Activated B cell treated with CpG ODN at 0.5 μM for 24 hours (primary cell): ENCODE measurements at regions of chr16 and their contacts with region 1.

Region 1: GRCh38 chr16:11742539-11743307 is at the start of gene TXNDC11:
- DNase-seq: peak; percentile 100
- ATAC-seq: peak; percentile 91
- H3K4me3 Mint-ChIP-seq: peak within 1 kb of the TSS; percentile 89
- H3K27ac Mint-ChIP-seq: peak within 1 kb of the TSS; percentile 89
- H3K4me1 Mint-ChIP-seq: peaks cover 58% of the 10 kb centered on the region
- H3K27me3 Mint-ChIP-seq: no peaks in the 10 kb centered on the region
- CTCF ChIP-seq: no peak
- total RNA-seq, gene TXNDC11: 54.3 and 63.2 TPM in 2 replicates

Region 2: DNA sequence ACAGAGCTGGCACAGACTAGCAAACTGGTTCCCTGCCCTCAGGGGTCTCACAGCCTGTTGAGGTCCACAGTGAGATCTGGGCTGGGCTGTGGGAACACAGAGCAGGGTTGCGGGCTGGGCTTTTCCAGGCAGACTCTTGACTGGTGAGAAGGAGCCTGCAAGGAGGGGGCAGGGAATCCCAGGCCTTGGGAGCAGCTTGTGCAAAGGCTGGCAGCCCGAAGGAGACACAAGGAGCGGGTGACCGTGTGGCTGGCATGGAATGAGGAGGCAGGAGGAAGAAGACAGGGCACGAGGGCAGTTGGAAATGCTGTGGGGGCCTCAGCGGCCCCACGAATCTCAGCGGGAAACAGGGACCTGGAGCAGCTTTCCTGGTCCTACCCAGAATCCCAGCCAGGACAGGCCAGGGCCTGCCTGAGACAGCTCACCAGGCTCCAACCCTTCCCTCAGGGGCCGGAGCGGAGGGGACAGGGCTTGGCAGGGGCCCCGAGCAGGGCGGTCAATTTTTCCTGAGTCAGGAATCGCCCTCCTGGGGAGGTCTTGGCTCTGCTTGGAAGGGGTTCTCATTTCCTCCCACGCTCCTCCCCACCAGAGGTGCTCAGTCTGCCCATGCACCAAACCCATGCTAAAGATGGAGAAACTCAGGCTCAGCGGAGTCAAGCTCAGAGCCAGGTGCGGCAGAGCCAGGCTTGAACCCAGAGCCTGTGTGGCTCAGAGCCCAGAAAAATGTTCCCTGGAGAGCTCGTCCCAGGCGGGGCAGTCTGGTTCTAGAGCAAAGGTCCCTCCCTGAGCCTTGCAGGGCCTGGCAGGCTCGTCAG is 83.6 kb before region 1 on chr16:
- CTCF ChIA-PET with region 1: no interaction called
- POLR2A ChIA-PET with region 1: no interaction called
- intact Hi-C with region 1: no loop called
- DNase-seq: no peak
- ATAC-seq: no peak
- H3K4me3 Mint-ChIP-seq: no peak overlapping the region
- H3K27ac Mint-ChIP-seq: no peak overlapping the region
- H3K4me1 Mint-ChIP-seq: peaks cover 12% of the 10 kb centered on the region
- H3K27me3 Mint-ChIP-seq: no peaks in the 10 kb centered on the region
- CTCF ChIP-seq: no peak

Region 3: GRCh38 chr16:11689031-11689761 is 53.5 kb before region 1 on chr16:
- CTCF ChIA-PET with region 1: no interaction called
- POLR2A ChIA-PET with region 1: interaction called, 13 read pairs
- intact Hi-C with region 1: loop called (anchors 2 kb)
- DNase-seq: no peak
- ATAC-seq: peak; percentile 98
- H3K4me3 Mint-ChIP-seq: peak overlapping the region; percentile 58
- H3K27ac Mint-ChIP-seq: peak overlapping the region; percentile 84
- H3K4me1 Mint-ChIP-seq: peaks cover 77% of the 10 kb centered on the region
- H3K27me3 Mint-ChIP-seq: no peaks in the 10 kb centered on the region
- CTCF ChIP-seq: no peak

Region 4: GRCh38 chr16:11757671-11758545 is 15.2 kb after region 1 on chr16:
- CTCF ChIA-PET with region 1: no interaction called
- POLR2A ChIA-PET with region 1: interaction called, 61 read pairs
- intact Hi-C with region 1: loop called (anchors 1 kb)
- DNase-seq: no peak
- ATAC-seq: no peak
- H3K4me3 Mint-ChIP-seq: no peak overlapping the region
- H3K27ac Mint-ChIP-seq: no peak overlapping the region
- H3K4me1 Mint-ChIP-seq: peaks cover 31% of the 10 kb centered on the region
- H3K27me3 Mint-ChIP-seq: no peaks in the 10 kb centered on the region
- CTCF ChIP-seq: no peak

Region 5: DNA sequence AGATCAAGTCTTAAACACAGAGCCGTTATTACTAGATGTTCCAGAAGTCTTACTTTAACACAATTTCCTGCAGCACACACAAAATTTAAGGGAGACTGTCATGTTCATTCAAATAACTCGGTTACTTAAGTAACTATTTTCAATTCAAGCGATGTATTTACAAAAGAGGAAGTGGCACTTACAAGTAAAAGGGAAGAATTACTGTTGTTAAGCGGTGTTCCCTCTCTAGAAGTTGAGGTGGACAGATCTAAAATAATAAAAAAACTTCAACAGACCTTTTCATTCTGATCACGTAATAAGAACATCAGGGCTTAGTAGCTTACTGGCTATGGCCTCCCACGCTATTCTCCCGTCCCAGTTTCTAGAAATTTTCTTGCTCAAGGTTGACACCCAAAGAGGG is 26.1 kb after region 1 on chr16:
- CTCF ChIA-PET with region 1: interaction called, 3 read pairs
- POLR2A ChIA-PET with region 1: interaction called, 13 read pairs
- intact Hi-C with region 1: loop called (anchors 2 kb)
- DNase-seq: no peak
- ATAC-seq: peak; percentile 79
- H3K4me3 Mint-ChIP-seq: peak overlapping the region; percentile 61
- H3K27ac Mint-ChIP-seq: peak overlapping the region; percentile 90
- H3K4me1 Mint-ChIP-seq: peaks cover 50% of the 10 kb centered on the region
- H3K27me3 Mint-ChIP-seq: no peaks in the 10 kb centered on the region
- CTCF ChIP-seq: no peak

Region 6: DNA sequence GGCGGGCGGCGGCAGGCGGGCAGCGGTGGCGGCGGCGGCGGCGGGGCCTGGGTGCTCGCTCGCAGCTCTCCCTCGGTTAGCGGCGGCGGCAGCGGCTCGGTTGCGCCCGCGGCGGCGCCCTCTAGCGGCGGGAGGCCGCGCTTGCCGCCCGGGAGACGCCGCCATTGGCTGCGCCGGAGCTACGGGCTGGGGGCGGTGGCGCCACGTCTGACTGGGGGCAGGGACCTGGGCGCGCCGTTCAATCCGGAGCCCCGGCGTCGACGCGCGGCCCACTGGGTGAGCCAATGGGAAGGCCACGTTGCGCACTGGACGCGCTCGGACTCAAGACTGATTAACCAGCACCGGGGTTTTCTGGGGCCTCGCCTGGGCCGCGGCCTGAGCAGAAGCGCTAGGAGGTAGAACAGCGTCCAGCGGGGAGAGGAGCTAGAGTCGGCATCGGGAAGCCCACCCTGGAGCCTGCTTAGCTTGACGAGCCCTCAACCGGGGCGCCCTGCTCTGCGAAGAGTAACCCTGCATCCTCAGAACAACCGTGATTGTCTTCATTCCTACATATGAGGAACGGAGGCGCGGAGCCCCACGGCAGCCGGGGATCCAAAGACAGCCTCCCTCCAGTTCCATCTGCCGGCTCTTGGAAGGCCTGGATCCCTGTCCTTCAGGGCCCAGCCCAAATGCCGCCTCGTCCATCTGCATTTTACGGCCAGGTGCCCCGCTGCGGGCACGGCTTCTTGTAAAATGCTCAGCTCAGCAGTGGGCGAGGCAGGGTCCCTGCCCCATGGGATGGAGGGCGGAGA is 54.6 kb after region 1 on chr16 and contains the start of gene ZC3H7A:
- CTCF ChIA-PET with region 1: interaction called, 32 read pairs
- POLR2A ChIA-PET with region 1: interaction called, 151 read pairs
- intact Hi-C with region 1: loop called (anchors 1 kb)
- DNase-seq: peak; percentile 94
- ATAC-seq: peak; percentile 97
- H3K4me3 Mint-ChIP-seq: peak within 1 kb of the TSS; percentile 95
- H3K27ac Mint-ChIP-seq: peak within 1 kb of the TSS; percentile 96
- H3K4me1 Mint-ChIP-seq: peaks cover 73% of the 10 kb centered on the region
- H3K27me3 Mint-ChIP-seq: no peaks in the 10 kb centered on the region
- CTCF ChIP-seq: no peak
- total RNA-seq, gene ZC3H7A: 143 and 163 TPM in 2 replicates

Region 7: GRCh38 chr16:11806721-11807120 is 64.0 kb after region 1 on chr16:
- CTCF ChIA-PET with region 1: no interaction called
- POLR2A ChIA-PET with region 1: interaction called, 27 read pairs
- intact Hi-C with region 1: loop called (anchors 1 kb)
- DNase-seq: no peak
- ATAC-seq: no peak
- H3K4me3 Mint-ChIP-seq: no peak overlapping the region
- H3K27ac Mint-ChIP-seq: no peak overlapping the region
- H3K4me1 Mint-ChIP-seq: peaks cover 16% of the 10 kb centered on the region
- H3K27me3 Mint-ChIP-seq: no peaks in the 10 kb centered on the region
- CTCF ChIP-seq: no peak